HepG2 (cell line): ENCODE measurements at regions of chr9 and their contacts with region 1.

Region 1: GRCh38 chr9:1094749-1095148 is 44.6 kb downstream of the DMRT2 start:
- DNase-seq: no peak
- ATAC-seq: no peak
- H3K4me3 ChIP-seq: no peak overlapping the region
- H3K27ac ChIP-seq: no peak overlapping the region
- H3K4me1 ChIP-seq: no peaks in the 10 kb centered on the region
- H3K27me3 ChIP-seq: no peaks in the 10 kb centered on the region
- CTCF ChIP-seq: no peak
- EP300 ChIP-seq: no peak
- POLR2A ChIP-seq: no peak
- RAD21 ChIP-seq: no peak

Region 2: DNA sequence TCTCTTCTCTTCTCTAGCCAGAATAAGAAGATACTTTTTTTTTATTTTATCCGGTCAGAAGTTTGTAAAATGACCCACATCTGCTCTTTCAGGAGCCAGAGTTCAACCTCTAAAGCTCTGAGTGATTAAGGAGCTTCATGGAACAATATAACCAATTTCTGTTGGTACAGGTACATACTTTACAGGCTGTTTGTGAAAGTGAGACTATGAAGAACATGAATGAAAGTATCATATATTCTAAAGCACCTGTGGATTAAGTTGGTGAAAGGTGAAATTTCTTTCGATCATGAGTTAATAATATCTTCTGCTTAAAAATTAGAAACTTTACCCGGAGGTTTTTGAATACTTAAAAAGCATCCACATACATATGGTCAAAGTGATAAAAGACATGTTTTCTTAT is 20.6 kb after region 1 on chr9:
- CTCF ChIA-PET with region 1: no interaction called
- POLR2A ChIA-PET with region 1: no interaction called
- in situ Hi-C with region 1: no loop called
- intact Hi-C with region 1: no loop called
- DNase-seq: no peak
- ATAC-seq: no peak
- H3K4me3 ChIP-seq: no peak overlapping the region
- H3K27ac ChIP-seq: no peak overlapping the region
- H3K4me1 ChIP-seq: no peaks in the 10 kb centered on the region
- H3K27me3 ChIP-seq: no peaks in the 10 kb centered on the region
- CTCF ChIP-seq: no peak
- EP300 ChIP-seq: no peak
- POLR2A ChIP-seq: no peak
- RAD21 ChIP-seq: no peak

Region 3: DNA sequence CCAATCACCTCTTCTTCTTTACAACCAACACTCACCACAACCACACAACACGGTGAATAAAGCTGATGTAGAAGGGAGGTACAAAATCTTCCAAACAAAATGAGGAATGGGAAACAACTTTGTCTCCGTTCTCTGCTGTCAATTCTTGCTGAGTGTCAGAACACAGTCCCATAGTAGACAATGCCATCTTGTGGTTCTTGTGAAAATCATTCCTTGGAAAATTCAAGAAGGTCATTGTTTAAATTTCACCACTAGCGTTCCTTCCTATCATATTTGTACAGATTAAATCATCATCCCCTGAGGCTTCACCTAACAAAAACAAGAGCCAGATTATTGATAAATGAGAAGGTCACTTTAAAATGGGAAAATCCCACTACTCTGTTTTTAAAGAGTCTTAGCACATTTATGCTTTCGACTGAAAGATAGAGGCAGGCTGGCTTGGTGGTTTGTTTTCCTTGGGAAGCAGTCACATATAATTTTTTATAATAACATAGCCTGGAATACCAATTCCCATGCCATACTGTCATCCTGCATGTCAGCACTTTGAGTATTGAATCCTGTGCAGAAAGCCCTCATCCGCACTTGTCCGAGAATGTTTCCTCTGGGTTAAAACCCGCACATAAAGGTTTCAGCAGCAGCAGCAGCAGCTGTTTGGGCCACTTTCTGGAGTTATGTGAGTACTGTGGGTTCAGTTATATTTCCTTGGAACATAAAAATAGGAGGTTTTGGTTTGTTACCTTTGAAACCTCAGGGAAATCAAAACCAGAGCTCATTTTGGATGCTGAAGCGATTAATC is 525.4 kb after region 1 on chr9:
- CTCF ChIA-PET with region 1: no interaction called
- POLR2A ChIA-PET with region 1: no interaction called
- in situ Hi-C with region 1: no loop called
- intact Hi-C with region 1: loop called (anchors 5 kb)
- DNase-seq: peak; percentile 2
- ATAC-seq: no peak
- H3K4me3 ChIP-seq: no peak overlapping the region
- H3K27ac ChIP-seq: no peak overlapping the region
- H3K4me1 ChIP-seq: no peaks in the 10 kb centered on the region
- H3K27me3 ChIP-seq: no peaks in the 10 kb centered on the region
- CTCF ChIP-seq: peak; percentile 43
- EP300 ChIP-seq: no peak
- POLR2A ChIP-seq: no peak
- RAD21 ChIP-seq: no peak